ENCODE measurements at regions of chr6 and their contacts with region 1.

Region 1: DNA sequence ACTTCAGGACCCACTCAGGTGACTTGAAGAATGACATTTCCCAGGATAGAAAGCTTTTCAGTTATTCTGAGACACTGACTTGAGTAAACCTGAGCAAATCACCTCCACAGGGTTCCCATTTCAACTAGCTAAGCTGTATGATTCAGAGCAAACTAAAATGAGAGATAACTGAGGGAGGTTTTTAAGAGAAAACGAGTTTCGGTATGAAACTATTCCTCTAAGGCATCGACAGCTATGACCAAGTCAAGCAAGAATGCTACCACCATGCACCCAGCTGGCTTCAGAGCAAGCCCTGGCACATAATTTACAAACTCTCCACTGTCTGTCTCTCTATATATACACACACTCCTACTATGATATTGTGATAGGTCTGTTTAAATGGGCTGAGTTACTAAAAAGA is 75.4 kb downstream of the PERP start:
- DNase-seq: peak; percentile 42
- H3K4me3 ChIP-seq: peak overlapping the region in 2 of 4 donors; percentile 8 to 25
- H3K27ac ChIP-seq: peak overlapping the region; percentile 74 to 86 (median 78)
- H3K4me1 ChIP-seq: peaks cover 4 to 33% (median 27%) of the 10 kb centered on the region in 4 donors
- H3K27me3 ChIP-seq: no peaks in the 10 kb centered on the region
- CTCF ChIP-seq: no peak
- EP300 ChIP-seq: no peak
- POLR2A ChIP-seq: no peak

Region 2: DNA sequence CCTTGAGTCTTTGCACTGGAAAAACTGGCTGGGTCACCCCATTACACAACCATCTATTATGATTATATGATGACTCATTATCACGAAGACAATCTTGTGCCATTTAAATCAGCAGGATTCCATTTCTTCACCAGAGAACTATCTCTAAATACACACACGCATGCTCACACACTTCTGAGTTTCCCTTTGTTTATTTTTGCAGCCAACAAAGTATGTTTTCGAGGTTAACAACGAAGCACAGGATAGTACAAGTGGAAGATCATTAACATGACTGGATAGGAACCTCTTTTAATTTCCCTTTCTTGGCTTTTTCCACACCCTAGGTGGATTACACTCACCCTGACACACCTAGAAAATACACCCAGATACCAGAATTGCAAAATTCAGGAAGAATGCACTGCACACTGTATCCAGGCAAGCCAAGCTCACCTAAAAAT is 56.5 kb after region 1 on chr6:
- intact Hi-C with region 1: loop called (anchors 5 kb)
- DNase-seq: no peak
- H3K4me3 ChIP-seq: no peak overlapping the region
- H3K27ac ChIP-seq: peak overlapping the region; percentile 30 to 59 (median 56)
- H3K4me1 ChIP-seq: peaks cover 4 to 34% (median 19%) of the 10 kb centered on the region in 4 donors
- H3K27me3 ChIP-seq: no peaks in the 10 kb centered on the region
- CTCF ChIP-seq: no peak
- EP300 ChIP-seq: no peak
- POLR2A ChIP-seq: no peak